ENCODE measurements at regions of chr5 and their contacts with region 1.

Region 1: GRCh38 chr5:111278845-111279504 is 54.8 kb downstream of the CAMK4 start:
- DNase-seq: peak; percentile 74
- H3K4me3 Mint-ChIP-seq: no peak overlapping the region
- H3K27ac Mint-ChIP-seq: no peak overlapping the region
- H3K4me1 Mint-ChIP-seq: peaks cover 46% of the 10 kb centered on the region
- H3K27me3 Mint-ChIP-seq: no peaks in the 10 kb centered on the region

Region 2: DNA sequence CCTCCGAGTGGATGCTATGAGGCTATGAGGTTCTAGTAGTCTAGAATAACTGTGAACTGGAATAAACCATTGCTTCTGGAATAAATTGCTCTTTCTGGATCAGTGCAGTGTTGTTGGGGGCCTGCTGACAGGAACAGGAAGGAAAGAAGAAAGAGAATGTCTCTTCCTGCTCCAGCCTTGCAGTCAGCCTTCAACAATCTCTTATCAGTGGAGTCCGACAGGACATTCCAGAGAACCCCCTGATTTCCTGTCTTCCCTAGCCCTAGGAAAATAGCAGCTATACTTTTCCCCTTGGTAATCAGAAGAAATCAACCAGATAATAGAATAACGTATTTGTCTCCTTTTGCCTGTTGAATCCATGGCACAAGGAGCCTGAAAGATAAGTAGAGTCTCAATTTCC is 131.5 kb before region 1 on chr5:
- intact Hi-C with region 1: no loop called
- DNase-seq: no peak
- H3K4me3 Mint-ChIP-seq: no peak overlapping the region
- H3K27ac Mint-ChIP-seq: no peak overlapping the region
- H3K4me1 Mint-ChIP-seq: peaks cover 18% of the 10 kb centered on the region
- H3K27me3 Mint-ChIP-seq: peaks cover 14% of the 10 kb centered on the region

Region 3: GRCh38 chr5:111158105-111158744 is 120.8 kb before region 1 on chr5:
- intact Hi-C with region 1: loop called (anchors 1 kb)
- DNase-seq: peak; percentile 61
- H3K4me3 Mint-ChIP-seq: no peak overlapping the region
- H3K27ac Mint-ChIP-seq: no peak overlapping the region
- H3K4me1 Mint-ChIP-seq: peaks cover 27% of the 10 kb centered on the region
- H3K27me3 Mint-ChIP-seq: peaks cover 1% of the 10 kb centered on the region

Region 4: GRCh38 chr5:111223889-111224563 is 54.9 kb before region 1 on chr5 and contains the start of gene CAMK4:
- intact Hi-C with region 1: loop called (anchors 1 kb)
- DNase-seq: peak; percentile 74
- H3K4me3 Mint-ChIP-seq: peak within 1 kb of the TSS; percentile 97
- H3K27ac Mint-ChIP-seq: peak within 1 kb of the TSS; percentile 97
- H3K4me1 Mint-ChIP-seq: peaks cover 47% of the 10 kb centered on the region
- H3K27me3 Mint-ChIP-seq: no peaks in the 10 kb centered on the region
- total RNA-seq, gene CAMK4: 71.8 and 76.7 TPM in 2 replicates

Region 5: GRCh38 chr5:111254613-111255012 is 24.4 kb before region 1 on chr5:
- intact Hi-C with region 1: loop called (anchors 2 kb)
- DNase-seq: peak; percentile 41
- H3K4me3 Mint-ChIP-seq: peak overlapping the region; percentile 35
- H3K27ac Mint-ChIP-seq: peak overlapping the region; percentile 97
- H3K4me1 Mint-ChIP-seq: peaks cover 70% of the 10 kb centered on the region
- H3K27me3 Mint-ChIP-seq: no peaks in the 10 kb centered on the region

Region 6: DNA sequence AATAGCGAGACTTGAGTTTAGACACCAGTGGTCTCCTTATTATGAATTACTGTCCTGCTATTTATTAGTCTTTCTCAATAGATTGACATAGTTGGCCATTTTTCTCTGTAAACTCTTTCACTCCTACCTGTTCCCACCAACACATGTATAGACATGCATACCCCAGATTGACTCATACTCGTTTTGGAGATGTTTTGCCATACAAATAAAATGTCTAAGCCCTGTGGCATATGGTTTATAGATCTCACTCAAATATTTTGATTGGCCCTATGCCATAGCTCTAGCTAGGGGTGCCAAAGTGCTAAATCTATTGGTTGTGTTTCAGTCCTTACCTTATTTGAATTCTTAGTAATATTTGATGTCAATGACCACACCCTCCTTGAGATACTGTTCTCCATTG is 12.5 kb before region 1 on chr5:
- intact Hi-C with region 1: no loop called
- DNase-seq: no peak
- H3K4me3 Mint-ChIP-seq: no peak overlapping the region
- H3K27ac Mint-ChIP-seq: no peak overlapping the region
- H3K4me1 Mint-ChIP-seq: peaks cover 33% of the 10 kb centered on the region
- H3K27me3 Mint-ChIP-seq: no peaks in the 10 kb centered on the region

Region 7: GRCh38 chr5:111294551-111294950 is 15.6 kb after region 1 on chr5:
- intact Hi-C with region 1: loop called (anchors 2 kb)
- DNase-seq: no peak
- H3K4me3 Mint-ChIP-seq: no peak overlapping the region
- H3K27ac Mint-ChIP-seq: no peak overlapping the region
- H3K4me1 Mint-ChIP-seq: peaks cover 4% of the 10 kb centered on the region
- H3K27me3 Mint-ChIP-seq: no peaks in the 10 kb centered on the region

Region 8: DNA sequence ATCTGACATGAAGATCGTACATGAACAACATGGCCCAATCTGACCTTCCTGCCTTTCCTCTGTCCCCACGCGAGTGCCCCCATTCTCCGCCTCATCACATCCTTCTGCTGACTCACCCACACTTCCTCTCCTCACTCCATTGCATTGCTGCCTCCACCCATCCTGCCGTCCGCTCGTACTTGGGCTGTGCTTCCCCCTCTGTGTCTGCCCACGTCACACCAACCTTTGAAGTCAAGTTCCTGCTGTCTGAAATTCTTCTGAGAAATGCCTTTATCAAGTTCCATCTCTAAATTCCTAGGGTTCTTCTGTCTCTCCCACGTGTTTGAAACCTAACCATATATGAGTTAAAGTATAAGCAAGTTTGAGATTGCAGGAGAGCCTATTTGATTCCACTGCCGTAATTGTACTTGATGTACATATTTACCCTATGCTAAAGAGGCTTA is 251.3 kb after region 1 on chr5:
- intact Hi-C with region 1: no loop called
- DNase-seq: peak; percentile 80
- H3K4me3 Mint-ChIP-seq: peak overlapping the region; percentile 46
- H3K27ac Mint-ChIP-seq: peak overlapping the region; percentile 87
- H3K4me1 Mint-ChIP-seq: peaks cover 35% of the 10 kb centered on the region
- H3K27me3 Mint-ChIP-seq: no peaks in the 10 kb centered on the region

Region 9: GRCh38 chr5:112154940-112155686 is 876.1 kb after region 1 on chr5:
- intact Hi-C with region 1: loop called (anchors 10 kb)
- DNase-seq: no peak
- H3K4me3 Mint-ChIP-seq: no peak overlapping the region
- H3K27ac Mint-ChIP-seq: peak overlapping the region; percentile 68
- H3K4me1 Mint-ChIP-seq: peaks cover 12% of the 10 kb centered on the region
- H3K27me3 Mint-ChIP-seq: peaks cover 7% of the 10 kb centered on the region

Measured in activated T-helper 2 cell treated with anti-CD3 and anti-CD28 coated beads, Interferon-gamma antibody, Interleukin-2, Interleukin-4, amounts not matched to agents 10 μg/mL and 5 μg/mL and 100 μg/mL, durations not matched to agents 14 hours and 24 hours and 36 hours (primary cell).